ENCODE measurements at regions of chr16 and their contacts with region 1.

Region 1: GRCh38 chr16:17224879-17225281 is 245.9 kb downstream of the XYLT1 start:
- DNase-seq: peak; percentile 82
- ATAC-seq: peak; percentile 83
- H3K4me3 ChIP-seq: no peak overlapping the region
- H3K27ac ChIP-seq: no peak overlapping the region
- H3K4me1 ChIP-seq: peaks cover 4% of the 10 kb centered on the region; the same call in 1 of the 2 replicates
- H3K27me3 ChIP-seq: no peaks in the 10 kb centered on the region
- CTCF ChIP-seq: no peak
- POLR2A ChIP-seq: no peak
- RAD21 ChIP-seq: no peak

Region 2: GRCh38 chr16:17245776-17246175 is 20.9 kb after region 1 on chr16:
- CTCF ChIA-PET with region 1: no interaction called
- POLR2A ChIA-PET with region 1: no interaction called
- dilution Hi-C with region 1: no loop called
- in situ Hi-C with region 1: no loop called
- intact Hi-C with region 1: loop called (anchors 2 kb)
- DNase-seq: no peak
- ATAC-seq: no peak
- H3K4me3 ChIP-seq: no peak overlapping the region
- H3K27ac ChIP-seq: no peak overlapping the region
- H3K4me1 ChIP-seq: no peaks in the 10 kb centered on the region
- H3K27me3 ChIP-seq: no peaks in the 10 kb centered on the region
- CTCF ChIP-seq: no peak
- POLR2A ChIP-seq: no peak
- RAD21 ChIP-seq: no peak

Measured in IMR-90 (cell line).